ENCODE measurements at regions of chr6 and their contacts with region 1.

Region 1: GRCh38 chr6:150813319-150813992 is 52.0 kb upstream of the MTHFD1L start:
- DNase-seq: no peak
- ATAC-seq: no peak
- H3K4me3 Mint-ChIP-seq: no peak overlapping the region
- H3K27ac Mint-ChIP-seq: no peak overlapping the region
- H3K4me1 Mint-ChIP-seq: peaks cover 7% of the 10 kb centered on the region; the same call in 1 of the 2 replicates
- H3K27me3 Mint-ChIP-seq: no peaks in the 10 kb centered on the region; the same call in 1 of the 2 replicates
- CTCF ChIP-seq: no peak

Region 2: DNA sequence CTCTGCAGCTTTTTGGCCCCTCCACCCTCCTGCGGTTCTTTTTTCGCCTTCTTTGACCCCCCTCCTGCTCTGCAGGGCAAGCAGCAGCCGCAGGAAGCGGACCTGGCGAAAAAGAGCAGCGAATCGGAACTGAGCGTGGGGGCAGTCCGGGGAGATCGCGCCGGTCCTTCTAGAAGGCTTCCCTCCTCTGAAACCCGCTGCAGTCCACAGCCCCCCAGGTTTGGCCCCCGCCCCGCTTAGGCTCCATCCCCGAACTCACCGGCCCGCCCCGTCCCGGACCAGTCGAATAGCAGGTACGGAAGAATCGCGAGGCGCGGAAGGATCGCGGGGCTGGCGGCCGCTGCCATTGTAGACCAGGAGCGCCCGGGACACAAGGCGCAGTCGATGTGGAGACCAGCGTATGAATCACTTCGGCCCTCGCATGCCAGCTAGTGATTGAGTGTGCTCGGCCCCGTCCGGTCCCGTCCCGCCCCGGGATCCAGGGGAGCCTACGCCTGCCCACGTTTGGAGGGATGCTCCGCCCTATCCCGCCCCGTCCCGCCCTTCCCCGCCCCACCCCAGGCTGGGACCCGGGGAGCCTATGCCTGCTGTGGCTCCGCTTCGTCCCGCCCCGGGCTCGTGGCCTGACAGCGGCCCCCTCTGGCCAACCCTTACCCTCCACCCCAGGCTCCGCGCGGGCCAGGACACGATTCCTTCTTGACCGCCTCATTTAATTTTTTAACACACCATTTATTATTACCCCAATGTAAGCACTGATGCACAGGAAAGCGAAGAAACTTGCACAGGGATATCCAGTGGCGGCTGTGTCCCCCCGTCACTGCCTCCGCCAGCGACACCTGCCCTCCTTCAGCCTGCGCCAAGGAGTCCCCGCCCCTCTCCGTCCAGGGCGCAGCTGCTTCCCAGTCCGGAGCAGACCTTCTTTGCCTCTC is 744.5 kb before region 1 on chr6 and contains the start of gene ULBP3:
- CTCF ChIA-PET with region 1: interaction called, 10 read pairs
- POLR2A ChIA-PET with region 1: no interaction called
- DNase-seq: peak; percentile 83
- ATAC-seq: peak; percentile 90
- H3K4me3 Mint-ChIP-seq: peak within 1 kb of the TSS; percentile 74
- H3K27ac Mint-ChIP-seq: no peak within 1 kb of the TSS
- H3K4me1 Mint-ChIP-seq: peaks cover 12% of the 10 kb centered on the region
- H3K27me3 Mint-ChIP-seq: peaks cover 40% of the 10 kb centered on the region
- CTCF ChIP-seq: no peak
- total RNA-seq, gene ULBP3: 4.0 to 6.0 TPM (median 5.6 TPM) in 3 replicates

Region 3: DNA sequence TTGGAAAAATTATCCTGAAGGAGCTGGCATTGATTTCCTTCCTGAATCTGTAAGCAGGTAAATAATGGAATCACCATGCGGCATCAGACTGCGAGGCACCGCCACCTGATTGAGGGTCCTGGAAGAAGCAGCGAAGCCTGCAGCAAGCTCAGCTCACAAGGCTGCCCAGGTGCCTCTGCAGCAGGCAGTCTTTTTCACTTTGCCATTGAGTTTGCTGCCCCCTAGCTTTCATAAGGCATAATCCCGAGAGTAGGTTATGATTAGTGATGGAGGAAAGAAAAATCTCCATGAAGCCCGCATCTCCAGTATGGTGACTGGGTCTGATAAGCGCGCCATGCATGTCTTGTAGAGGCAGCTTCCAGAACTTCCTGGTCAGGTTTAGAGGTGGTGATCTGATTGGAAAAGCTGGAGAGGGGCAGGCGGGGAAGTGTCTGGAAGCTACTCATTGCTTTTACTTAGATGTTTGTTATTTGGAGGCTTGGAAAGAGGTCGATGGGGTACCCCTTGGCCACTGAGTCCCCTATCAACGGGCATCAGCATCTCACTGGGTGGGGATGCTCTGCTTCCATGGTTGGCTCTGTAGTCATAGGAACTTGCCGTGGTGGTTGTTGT is 418.0 kb before region 1 on chr6:
- CTCF ChIA-PET with region 1: interaction called, 12 read pairs
- POLR2A ChIA-PET with region 1: no interaction called
- DNase-seq: peak; percentile 63
- ATAC-seq: peak; percentile 96
- H3K4me3 Mint-ChIP-seq: no peak overlapping the region
- H3K27ac Mint-ChIP-seq: no peak overlapping the region
- H3K4me1 Mint-ChIP-seq: no peaks in the 10 kb centered on the region
- H3K27me3 Mint-ChIP-seq: peaks cover 11% of the 10 kb centered on the region
- CTCF ChIP-seq: peak; percentile 51

Region 4: GRCh38 chr6:150600301-150601017 is 213.0 kb before region 1 on chr6:
- CTCF ChIA-PET with region 1: interaction called, 10 read pairs
- POLR2A ChIA-PET with region 1: interaction called, 5 read pairs
- DNase-seq: peak; percentile 79
- ATAC-seq: peak; percentile 66
- H3K4me3 Mint-ChIP-seq: peak overlapping the region; percentile 89
- H3K27ac Mint-ChIP-seq: peak overlapping the region; percentile 23; the same call in 1 of the 2 replicates
- H3K4me1 Mint-ChIP-seq: peaks cover 19% of the 10 kb centered on the region
- H3K27me3 Mint-ChIP-seq: peaks cover 64% of the 10 kb centered on the region
- CTCF ChIP-seq: peak; percentile 8; the same call in 1 of the 2 replicates

Region 5: GRCh38 chr6:150788089-150788488 is 25.4 kb before region 1 on chr6:
- CTCF ChIA-PET with region 1: no interaction called
- POLR2A ChIA-PET with region 1: no interaction called
- DNase-seq: no peak
- ATAC-seq: no peak
- H3K4me3 Mint-ChIP-seq: no peak overlapping the region
- H3K27ac Mint-ChIP-seq: no peak overlapping the region
- H3K4me1 Mint-ChIP-seq: no peaks in the 10 kb centered on the region
- H3K27me3 Mint-ChIP-seq: no peaks in the 10 kb centered on the region
- CTCF ChIP-seq: no peak

Region 6: DNA sequence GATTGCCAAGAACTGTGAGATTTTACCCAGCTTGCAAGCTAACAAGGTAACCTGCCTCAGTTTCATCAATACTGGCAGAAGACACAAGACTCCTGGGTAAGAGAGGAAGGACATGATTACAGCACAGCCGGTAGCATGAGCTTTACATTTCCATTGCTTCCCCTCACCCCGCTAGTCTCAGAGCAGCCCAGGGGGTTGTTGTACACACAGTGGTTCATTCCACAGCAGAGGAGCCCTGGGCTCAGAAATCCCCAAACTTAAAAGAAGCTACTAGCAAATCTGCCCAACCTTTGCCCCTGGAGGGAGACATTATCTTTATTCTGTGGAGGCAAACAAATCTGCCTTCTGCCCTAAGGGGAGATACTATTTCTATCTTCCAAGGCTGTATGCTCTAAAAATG is 34.9 kb after region 1 on chr6:
- CTCF ChIA-PET with region 1: interaction called, 12 read pairs
- POLR2A ChIA-PET with region 1: no interaction called
- DNase-seq: no peak
- ATAC-seq: peak; percentile 28; the same call in 1 of the 2 replicates
- H3K4me3 Mint-ChIP-seq: no peak overlapping the region
- H3K27ac Mint-ChIP-seq: no peak overlapping the region; the same call in 1 of the 2 replicates
- H3K4me1 Mint-ChIP-seq: peaks cover 14% of the 10 kb centered on the region
- H3K27me3 Mint-ChIP-seq: peaks cover 3% of the 10 kb centered on the region; the same call in 1 of the 2 replicates
- CTCF ChIP-seq: no peak

Region 7: DNA sequence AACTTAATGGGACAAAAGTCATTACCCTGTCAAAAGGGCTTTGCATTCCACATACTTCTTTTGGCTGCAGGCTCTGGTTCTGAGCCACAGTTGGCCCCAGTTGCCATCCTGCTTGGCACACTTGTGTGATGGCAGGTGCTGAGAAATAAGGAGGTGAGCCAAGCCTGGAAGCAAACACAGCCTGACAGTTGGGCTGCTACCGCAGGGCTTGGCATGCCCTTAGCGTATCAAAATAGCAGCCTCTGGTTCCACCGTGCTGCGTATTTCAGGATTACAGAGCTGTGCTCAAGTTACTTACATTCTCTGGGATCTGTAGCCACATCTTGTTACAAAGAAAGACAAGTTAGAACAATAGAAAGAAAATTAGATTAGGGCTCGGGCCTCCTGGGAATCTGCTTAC is 63.1 kb after region 1 on chr6:
- CTCF ChIA-PET with region 1: interaction called, 19 read pairs
- POLR2A ChIA-PET with region 1: interaction called, 4 read pairs
- DNase-seq: no peak
- ATAC-seq: no peak
- H3K4me3 Mint-ChIP-seq: no peak overlapping the region
- H3K27ac Mint-ChIP-seq: peak overlapping the region; percentile 65; the same call in 1 of the 2 replicates
- H3K4me1 Mint-ChIP-seq: peaks cover 63% of the 10 kb centered on the region
- H3K27me3 Mint-ChIP-seq: no peaks in the 10 kb centered on the region
- CTCF ChIP-seq: no peak

Region 8: GRCh38 chr6:150928882-150929281 is 115.4 kb after region 1 on chr6:
- CTCF ChIA-PET with region 1: interaction called, 12 read pairs
- POLR2A ChIA-PET with region 1: no interaction called
- DNase-seq: peak; percentile 39
- ATAC-seq: peak; percentile 88
- H3K4me3 Mint-ChIP-seq: no peak overlapping the region
- H3K27ac Mint-ChIP-seq: no peak overlapping the region
- H3K4me1 Mint-ChIP-seq: no peaks in the 10 kb centered on the region
- H3K27me3 Mint-ChIP-seq: no peaks in the 10 kb centered on the region
- CTCF ChIP-seq: no peak; the same call in 1 of the 2 replicates

Region 9: DNA sequence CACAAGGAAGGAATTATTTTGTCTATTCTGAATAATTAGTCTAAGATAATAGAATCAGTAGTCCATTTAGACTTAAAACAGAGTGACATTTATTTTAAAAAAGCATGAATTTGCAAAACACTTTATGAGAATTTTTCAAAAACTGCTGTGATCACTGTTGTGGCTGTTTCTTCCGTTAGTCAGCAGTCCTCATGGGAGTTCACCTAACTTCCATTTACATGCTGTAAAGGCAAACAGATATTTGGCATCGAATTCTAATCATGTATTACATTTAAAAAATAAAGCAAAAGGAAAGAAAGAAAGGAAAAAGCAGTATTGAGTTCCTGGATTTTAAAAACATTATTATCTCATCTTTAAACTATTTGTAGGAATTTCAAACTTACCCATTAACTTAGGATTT is 163.8 kb after region 1 on chr6:
- CTCF ChIA-PET with region 1: no interaction called
- POLR2A ChIA-PET with region 1: no interaction called
- DNase-seq: no peak
- ATAC-seq: no peak
- H3K4me3 Mint-ChIP-seq: no peak overlapping the region
- H3K27ac Mint-ChIP-seq: no peak overlapping the region
- H3K4me1 Mint-ChIP-seq: peaks cover 7% of the 10 kb centered on the region; the same call in 1 of the 2 replicates
- H3K27me3 Mint-ChIP-seq: no peaks in the 10 kb centered on the region
- CTCF ChIP-seq: no peak